Transverse colon (tissue), 4 donors: ENCODE measurements at regions of chr18 and their contacts with region 1.

Region 1: DNA sequence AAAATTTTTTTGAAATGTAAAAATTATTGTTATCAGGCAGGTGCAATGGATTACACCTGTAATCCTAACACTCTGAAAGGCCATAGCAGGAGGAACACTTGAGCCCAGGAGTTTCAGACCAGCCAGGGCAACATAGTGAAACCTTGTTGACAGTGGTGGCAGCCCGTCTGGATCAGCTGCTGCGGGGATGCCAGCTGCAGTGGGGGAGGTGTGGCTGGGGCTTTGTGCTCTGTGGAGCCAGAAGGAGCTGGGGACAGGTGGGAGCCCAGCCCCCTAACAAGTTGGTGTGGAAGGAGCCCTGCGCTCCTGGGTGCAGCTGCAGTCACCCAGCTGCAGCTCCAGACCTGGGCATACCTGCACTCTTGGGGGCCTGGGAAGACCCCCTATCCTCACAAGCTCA is 182.4 kb upstream of the MC4R start:
- DNase-seq: no peak
- H3K4me3 ChIP-seq: no peak overlapping the region
- H3K27ac ChIP-seq: no peak overlapping the region
- H3K4me1 ChIP-seq: no peaks in the 10 kb centered on the region
- H3K27me3 ChIP-seq: no peaks in the 10 kb centered on the region
- CTCF ChIP-seq: no peak
- EP300 ChIP-seq: no peak
- POLR2A ChIP-seq: no peak

Region 2: DNA sequence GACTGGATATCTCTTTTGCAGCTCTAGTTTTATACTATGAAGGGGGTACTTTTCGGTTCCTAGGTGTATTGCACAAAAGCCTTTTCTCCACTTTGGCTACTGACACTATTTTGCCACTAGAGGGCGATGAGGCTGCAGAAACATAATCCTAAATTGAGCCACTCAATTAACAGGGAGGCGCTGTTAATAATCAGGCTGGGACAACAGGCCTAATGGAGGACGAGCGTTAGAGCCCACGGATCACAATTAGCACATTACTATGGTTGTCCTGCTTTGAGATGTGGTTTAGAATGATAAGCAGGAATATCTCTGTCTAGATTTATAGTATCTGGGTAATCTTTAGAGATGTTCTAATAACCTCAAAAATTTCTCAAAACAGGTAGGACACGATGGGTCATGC is 717.4 kb before region 1 on chr18:
- in situ Hi-C with region 1: loop called in 3 of 4 experiments (anchors 10 to 25 kb)
- intact Hi-C with region 1: no loop called
- DNase-seq: peak; percentile 31
- H3K4me3 ChIP-seq: no peak overlapping the region
- H3K27ac ChIP-seq: no peak overlapping the region
- H3K4me1 ChIP-seq: no peaks in the 10 kb centered on the region
- H3K27me3 ChIP-seq: no peaks in the 10 kb centered on the region
- CTCF ChIP-seq: peak; percentile 71 to 87 (median 84)
- EP300 ChIP-seq: no peak
- POLR2A ChIP-seq: no peak

Region 3: GRCh38 chr18:60601249-60601648 is 46.3 kb after region 1 on chr18:
- in situ Hi-C with region 1: no loop called
- intact Hi-C with region 1: no loop called
- DNase-seq: no peak
- H3K4me3 ChIP-seq: no peak overlapping the region
- H3K27ac ChIP-seq: no peak overlapping the region
- H3K4me1 ChIP-seq: no peaks in the 10 kb centered on the region
- H3K27me3 ChIP-seq: no peaks in the 10 kb centered on the region
- CTCF ChIP-seq: no peak
- EP300 ChIP-seq: no peak
- POLR2A ChIP-seq: no peak